ENCODE measurements at regions of chr1 and their contacts with region 1.

Region 1: DNA sequence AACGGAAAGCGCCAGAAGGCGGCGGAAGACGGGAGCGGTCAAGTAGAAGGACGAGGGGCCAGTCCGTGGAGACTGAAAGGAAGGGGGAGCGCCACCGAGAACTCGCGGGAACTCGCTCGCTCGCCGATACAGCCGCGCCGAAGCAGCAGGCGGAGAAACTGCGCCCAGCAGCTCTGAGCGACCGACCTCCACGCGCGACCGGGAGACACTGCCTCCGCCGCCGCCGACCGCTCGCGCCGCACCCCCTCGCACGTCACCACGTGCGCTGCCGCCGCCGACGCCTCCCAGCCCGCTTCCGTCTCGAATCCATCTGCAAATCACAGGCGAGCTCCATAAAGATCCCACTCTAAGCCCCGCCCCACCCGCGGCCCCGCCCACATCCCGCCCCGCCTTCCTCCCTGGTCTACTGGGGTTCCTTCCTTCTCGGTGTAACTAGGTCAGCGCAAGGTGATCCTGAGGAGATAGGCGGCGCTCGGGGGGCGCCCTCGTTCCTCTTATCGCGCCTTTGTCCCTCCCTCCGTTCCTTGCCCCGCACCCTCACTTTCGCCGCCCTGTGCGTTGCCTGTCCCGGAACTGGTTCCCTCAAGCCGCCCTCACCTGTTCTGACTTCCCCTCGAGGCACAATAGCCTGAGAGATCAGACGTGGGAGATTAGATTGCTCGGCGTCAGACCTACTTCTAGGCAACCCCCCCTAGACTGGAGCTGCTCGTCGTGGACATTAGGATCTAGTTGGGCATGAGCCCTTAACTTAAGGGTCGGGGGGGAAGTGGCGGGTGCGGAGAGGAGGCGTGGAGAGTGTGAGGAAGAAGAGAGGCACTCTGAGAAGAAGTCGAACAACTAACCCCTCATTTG is at the start of gene IVNS1ABP:
- H3K4me3 ChIP-seq: peak within 1 kb of the TSS; percentile 91
- H3K27ac ChIP-seq: peak within 1 kb of the TSS; percentile 90
- H3K4me1 ChIP-seq: peaks cover 9% of the 10 kb centered on the region
- CTCF ChIP-seq: peak; percentile 80

Region 2: DNA sequence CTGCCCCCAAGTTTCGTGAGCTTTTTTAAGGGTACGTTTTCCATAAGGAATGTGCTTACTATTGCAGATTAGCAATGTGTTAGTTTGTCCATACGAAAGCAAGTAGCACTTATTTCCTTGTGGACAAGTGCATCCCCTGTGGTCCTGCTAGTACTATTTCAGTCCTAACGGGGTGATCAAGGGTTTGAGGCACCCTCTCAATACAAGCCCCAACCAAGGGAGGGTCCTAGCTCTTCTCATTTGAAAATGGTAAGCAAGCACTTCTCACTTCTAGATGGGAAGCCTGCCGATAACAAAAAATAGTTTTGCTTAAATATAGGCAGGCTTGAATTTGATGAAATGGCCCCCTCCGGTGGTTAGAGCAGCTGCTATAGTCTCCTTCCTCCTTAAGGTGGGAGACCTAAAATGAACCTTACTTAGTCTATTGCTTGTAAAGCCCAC is 352.9 kb after region 1 on chr1:
- CTCF ChIA-PET with region 1: interaction called, 11 read pairs
- POLR2A ChIA-PET with region 1: interaction called, 4 read pairs
- H3K4me3 ChIP-seq: no peak overlapping the region
- H3K27ac ChIP-seq: no peak overlapping the region
- H3K4me1 ChIP-seq: 0 out of 2 replicates have a peak, but pooled peaks cover 3% of the 10 kb centered on the region
- CTCF ChIP-seq: peak; percentile 45

Measured in HEK293 (cell line).